ENCODE measurements at regions of chr5 and their contacts with region 1.

Region 1: DNA sequence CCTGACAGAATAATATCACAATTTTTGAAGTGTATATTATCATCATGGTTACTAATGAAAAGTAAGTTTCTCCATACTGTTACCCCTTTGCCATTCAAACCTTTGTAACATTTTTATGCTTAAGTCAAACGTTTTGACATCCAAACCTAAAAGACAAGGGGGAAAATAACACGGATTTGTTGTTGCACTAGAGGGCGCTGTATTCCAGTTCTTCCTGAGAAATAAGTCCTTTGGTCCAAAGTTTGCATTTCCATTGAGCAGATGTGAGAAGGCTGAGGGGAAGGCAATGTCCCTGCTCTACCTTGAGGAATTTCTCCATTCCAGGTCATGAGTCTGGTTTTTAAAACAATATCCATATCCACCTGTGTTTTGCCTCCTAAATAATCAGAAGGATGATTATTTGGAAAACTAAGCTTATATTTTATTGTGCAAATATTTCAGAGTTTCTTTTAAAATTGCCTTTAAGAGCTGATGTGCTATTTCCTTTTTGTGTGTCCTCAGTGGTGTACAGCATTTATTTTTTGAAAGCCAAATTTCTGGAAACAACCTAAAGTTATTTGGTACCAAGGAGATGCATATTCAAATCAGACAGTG is 9.7 kb downstream of the LECT2 start:
- DNase-seq: peak; percentile 45
- H3K4me3 ChIP-seq: no peak overlapping the region
- H3K27ac ChIP-seq: no peak overlapping the region
- H3K4me1 ChIP-seq: no peaks in the 10 kb centered on the region
- H3K27me3 ChIP-seq: no peaks in the 10 kb centered on the region
- CTCF ChIP-seq: peak; percentile 73 to 87 (median 78)
- EP300 ChIP-seq: no peak
- POLR2A ChIP-seq: no peak

Region 2: GRCh38 chr5:135887351-135887864 is 57.7 kb before region 1 on chr5:
- in situ Hi-C with region 1: no loop called
- intact Hi-C with region 1: loop called (anchors 5 kb)
- DNase-seq: peak; percentile 69
- H3K4me3 ChIP-seq: no peak overlapping the region
- H3K27ac ChIP-seq: no peak overlapping the region
- H3K4me1 ChIP-seq: peaks cover 0 to 4% (median 1%) of the 10 kb centered on the region in 4 donors
- H3K27me3 ChIP-seq: no peaks in the 10 kb centered on the region
- CTCF ChIP-seq: peak; percentile 76 to 86 (median 79)
- EP300 ChIP-seq: no peak
- POLR2A ChIP-seq: no peak

Region 3: GRCh38 chr5:136062366-136063274 is 117.6 kb after region 1 on chr5:
- in situ Hi-C with region 1: loop called in 2 of 4 experiments (anchors 10 to 25 kb)
- intact Hi-C with region 1: loop called (anchors 10 kb)
- DNase-seq: no peak
- H3K4me3 ChIP-seq: no peak overlapping the region
- H3K27ac ChIP-seq: no peak overlapping the region
- H3K4me1 ChIP-seq: peaks cover 4 to 27% (median 16%) of the 10 kb centered on the region in 4 donors
- H3K27me3 ChIP-seq: no peaks in the 10 kb centered on the region
- CTCF ChIP-seq: peak; percentile 39 to 56 (median 49)
- EP300 ChIP-seq: no peak
- POLR2A ChIP-seq: no peak

Region 4: DNA sequence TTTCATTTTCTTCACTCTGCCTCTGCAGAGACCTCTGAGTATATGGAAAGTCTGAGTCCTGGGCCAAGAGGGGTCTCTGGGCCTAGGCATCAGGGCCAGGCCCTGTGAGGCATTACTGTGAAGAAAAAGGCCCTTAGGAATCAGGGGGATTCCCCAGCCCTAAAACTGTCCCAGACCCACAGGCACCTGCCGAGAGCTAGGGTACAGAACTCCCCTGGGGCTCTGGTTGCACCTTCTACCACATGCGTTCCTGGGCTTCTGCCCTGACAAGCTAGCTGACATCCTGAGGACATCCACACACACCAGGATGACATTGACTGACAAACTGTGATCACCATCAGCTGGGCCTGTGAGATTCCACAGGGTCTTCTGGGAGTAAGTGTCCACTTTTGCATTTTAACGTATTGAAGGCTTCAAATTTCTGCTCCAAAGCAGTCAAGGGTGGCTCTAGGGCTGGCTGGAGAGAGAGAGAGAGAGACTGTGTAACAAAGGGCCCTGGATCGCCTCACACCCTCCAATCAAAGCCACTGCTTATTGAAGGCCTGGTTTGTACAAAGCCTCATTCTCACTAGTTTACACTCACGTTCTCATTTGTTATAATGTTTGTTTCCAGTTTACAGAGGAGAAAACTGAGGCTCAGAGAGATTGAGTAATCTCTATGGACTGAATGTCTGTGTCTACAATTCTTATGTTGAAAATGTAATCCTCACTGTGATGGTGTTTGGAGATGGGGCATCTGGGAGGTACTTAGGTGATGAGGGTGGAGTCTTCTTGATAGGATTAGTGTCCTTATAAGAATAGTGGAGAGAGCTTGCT is 128.9 kb after region 1 on chr5:
- in situ Hi-C with region 1: loop called in 3 of 4 experiments (anchors 10 to 25 kb)
- intact Hi-C with region 1: loop called (anchors 10 kb)
- DNase-seq: no peak
- H3K4me3 ChIP-seq: no peak overlapping the region
- H3K27ac ChIP-seq: no peak overlapping the region
- H3K4me1 ChIP-seq: no peaks in the 10 kb centered on the region
- H3K27me3 ChIP-seq: no peaks in the 10 kb centered on the region
- CTCF ChIP-seq: no peak
- EP300 ChIP-seq: no peak
- POLR2A ChIP-seq: no peak

Region 5: DNA sequence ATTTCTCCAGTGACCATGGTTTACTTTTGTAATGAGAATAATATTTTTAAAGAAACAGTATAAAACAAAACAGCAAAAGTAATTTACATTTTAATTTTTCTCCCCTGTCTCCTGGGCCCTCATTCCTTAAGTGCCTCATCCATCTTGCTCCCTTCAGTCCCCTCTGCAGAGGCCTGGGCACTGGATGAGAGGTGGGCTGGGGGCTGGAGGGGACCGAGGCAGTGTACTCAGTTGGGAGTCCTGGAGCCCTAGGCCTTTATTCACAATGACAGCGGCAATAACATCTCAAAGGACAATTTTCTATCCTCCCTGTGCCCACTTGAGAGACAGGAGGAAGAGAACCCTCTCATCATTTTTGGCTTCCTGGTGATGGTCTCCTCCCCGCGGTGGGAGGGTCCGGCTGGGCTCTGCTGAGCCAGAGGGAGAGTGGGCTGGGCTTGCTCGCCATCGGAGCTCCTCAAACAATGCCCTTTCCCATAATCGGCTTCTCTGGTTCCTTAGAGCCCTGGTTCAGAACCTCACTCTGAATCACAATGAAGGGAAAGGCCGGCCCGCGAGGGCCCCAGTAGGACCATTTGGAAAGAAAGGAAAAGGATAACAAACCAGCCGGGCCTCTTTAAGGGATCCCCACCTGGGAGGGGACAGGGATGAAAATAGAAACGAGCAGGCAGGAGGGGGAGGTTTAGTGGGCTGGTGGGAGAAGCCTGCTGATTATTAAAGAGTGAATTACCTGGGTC is 257.6 kb after region 1 on chr5:
- in situ Hi-C with region 1: loop called in 1 of 4 experiments (anchors 10 kb)
- intact Hi-C with region 1: no loop called
- DNase-seq: no peak
- H3K4me3 ChIP-seq: no peak overlapping the region
- H3K27ac ChIP-seq: no peak overlapping the region
- H3K4me1 ChIP-seq: no peaks in the 10 kb centered on the region
- H3K27me3 ChIP-seq: no peaks in the 10 kb centered on the region
- CTCF ChIP-seq: no peak
- EP300 ChIP-seq: no peak
- POLR2A ChIP-seq: no peak

Region 6: DNA sequence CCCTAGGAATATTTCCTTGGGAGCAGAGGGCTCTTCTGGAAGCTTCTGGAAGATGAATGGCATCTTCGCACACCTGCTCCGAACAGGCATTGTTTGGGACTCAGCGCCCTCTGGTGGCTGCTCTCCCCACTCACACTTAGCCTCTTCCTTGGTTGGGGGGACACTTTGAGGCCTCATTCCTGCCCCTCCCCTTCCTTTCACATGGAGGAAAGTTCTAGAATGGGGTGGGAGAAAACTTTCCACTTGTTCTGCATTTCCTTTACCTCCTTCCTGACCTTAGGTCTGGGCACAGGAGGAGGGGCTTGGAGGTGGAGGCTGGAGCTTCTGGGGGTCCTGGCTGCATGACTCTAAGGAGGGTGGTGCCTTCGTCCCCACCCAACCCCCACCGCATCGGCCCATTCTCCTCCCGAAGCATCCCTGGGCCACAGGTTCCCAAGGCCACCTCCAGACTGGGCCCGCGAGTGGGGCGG is 267.2 kb after region 1 on chr5:
- in situ Hi-C with region 1: loop called in 2 of 4 experiments (anchors 10 kb)
- intact Hi-C with region 1: loop called (anchors 5 kb)
- DNase-seq: peak; percentile 67
- H3K4me3 ChIP-seq: no peak overlapping the region
- H3K27ac ChIP-seq: no peak overlapping the region
- H3K4me1 ChIP-seq: no peaks in the 10 kb centered on the region
- H3K27me3 ChIP-seq: no peaks in the 10 kb centered on the region
- CTCF ChIP-seq: peak; percentile 83 to 90 (median 87)
- EP300 ChIP-seq: no peak
- POLR2A ChIP-seq: no peak

Region 7: DNA sequence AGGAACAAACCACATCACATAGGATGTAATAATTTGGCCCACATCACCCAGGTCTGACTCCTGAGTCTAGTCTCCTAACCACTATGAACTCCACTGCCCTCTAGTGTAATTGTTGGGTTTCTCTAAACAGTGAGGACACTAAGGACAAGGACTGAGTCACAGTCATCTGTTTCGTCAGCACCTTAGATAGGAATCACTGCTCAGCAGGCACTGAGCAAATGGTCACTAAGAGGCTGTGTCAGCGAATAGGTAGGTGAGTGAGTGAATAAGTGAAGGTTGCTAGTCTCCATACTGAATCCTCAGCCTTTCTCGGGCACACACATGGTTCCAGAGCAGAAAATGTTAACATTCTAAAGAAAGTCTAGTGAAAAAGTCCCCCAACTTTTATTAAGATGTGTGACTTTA is 1275.5 kb after region 1 on chr5:
- in situ Hi-C with region 1: no loop called
- intact Hi-C with region 1: no loop called
- DNase-seq: no peak
- H3K4me3 ChIP-seq: no peak overlapping the region
- H3K27ac ChIP-seq: no peak overlapping the region
- H3K4me1 ChIP-seq: peaks cover 0 to 4% (median 0%) of the 10 kb centered on the region in 4 donors
- H3K27me3 ChIP-seq: no peaks in the 10 kb centered on the region
- CTCF ChIP-seq: peak in 4 of 5 experiments; percentile 9 to 20 (median 15)
- EP300 ChIP-seq: no peak
- POLR2A ChIP-seq: no peak